ENCODE measurements at regions of chr13 and their contacts with region 1.

Region 1: GRCh38 chr13:59677966-59678814 is 485.5 kb downstream of the DIAPH3 start:
- DNase-seq: peak; percentile 79
- H3K4me3 ChIP-seq: no peak overlapping the region
- H3K27ac ChIP-seq: no peak overlapping the region
- H3K4me1 ChIP-seq: peaks cover 2% of the 10 kb centered on the region
- H3K27me3 ChIP-seq: no peaks in the 10 kb centered on the region
- CTCF ChIP-seq: peak; percentile 69 to 70
- POLR2A ChIP-seq: no peak

Region 2: DNA sequence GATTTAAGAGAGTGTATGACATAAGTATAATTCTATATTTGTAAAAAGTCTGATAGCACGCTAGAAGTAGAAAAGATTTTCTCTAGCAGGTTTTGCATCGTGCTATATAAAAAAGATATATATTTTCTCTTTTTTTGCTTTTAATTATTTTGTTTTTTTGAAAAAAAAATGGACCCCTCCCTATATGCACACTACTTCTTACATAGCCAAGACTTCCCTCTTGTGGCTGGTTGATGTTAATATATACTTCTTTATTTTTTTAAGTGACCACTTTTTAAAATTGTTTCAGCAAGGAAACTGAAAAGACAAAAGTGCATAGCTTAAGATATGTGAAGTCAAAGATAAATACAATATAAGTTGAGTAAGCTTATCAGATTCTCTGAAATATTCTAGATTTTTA is 717.3 kb before region 1 on chr13:
- CTCF ChIA-PET with region 1: no interaction called
- POLR2A ChIA-PET with region 1: no interaction called
- dilution Hi-C with region 1: no loop called
- intact Hi-C with region 1: loop called (anchors 5 kb)
- DNase-seq: peak; percentile 33
- H3K4me3 ChIP-seq: no peak overlapping the region
- H3K27ac ChIP-seq: no peak overlapping the region
- H3K4me1 ChIP-seq: no peaks in the 10 kb centered on the region
- H3K27me3 ChIP-seq: no peaks in the 10 kb centered on the region
- CTCF ChIP-seq: peak in 1 of 2 donors; percentile 8
- POLR2A ChIP-seq: no peak

Region 3: GRCh38 chr13:59274958-59275727 is 403.0 kb before region 1 on chr13:
- CTCF ChIA-PET with region 1: no interaction called
- POLR2A ChIA-PET with region 1: no interaction called
- dilution Hi-C with region 1: no loop called
- intact Hi-C with region 1: no loop called
- DNase-seq: peak; percentile 21
- H3K4me3 ChIP-seq: no peak overlapping the region
- H3K27ac ChIP-seq: no peak overlapping the region
- H3K4me1 ChIP-seq: peaks cover 12% of the 10 kb centered on the region
- H3K27me3 ChIP-seq: no peaks in the 10 kb centered on the region
- CTCF ChIP-seq: no peak
- POLR2A ChIP-seq: no peak

Region 4: GRCh38 chr13:59343993-59344822 is 334.0 kb before region 1 on chr13:
- CTCF ChIA-PET with region 1: no interaction called
- POLR2A ChIA-PET with region 1: no interaction called
- dilution Hi-C with region 1: no loop called
- intact Hi-C with region 1: loop called (anchors 5 kb)
- DNase-seq: no peak
- H3K4me3 ChIP-seq: no peak overlapping the region
- H3K27ac ChIP-seq: no peak overlapping the region
- H3K4me1 ChIP-seq: peaks cover 12% of the 10 kb centered on the region
- H3K27me3 ChIP-seq: no peaks in the 10 kb centered on the region
- CTCF ChIP-seq: no peak
- POLR2A ChIP-seq: no peak

Region 5: DNA sequence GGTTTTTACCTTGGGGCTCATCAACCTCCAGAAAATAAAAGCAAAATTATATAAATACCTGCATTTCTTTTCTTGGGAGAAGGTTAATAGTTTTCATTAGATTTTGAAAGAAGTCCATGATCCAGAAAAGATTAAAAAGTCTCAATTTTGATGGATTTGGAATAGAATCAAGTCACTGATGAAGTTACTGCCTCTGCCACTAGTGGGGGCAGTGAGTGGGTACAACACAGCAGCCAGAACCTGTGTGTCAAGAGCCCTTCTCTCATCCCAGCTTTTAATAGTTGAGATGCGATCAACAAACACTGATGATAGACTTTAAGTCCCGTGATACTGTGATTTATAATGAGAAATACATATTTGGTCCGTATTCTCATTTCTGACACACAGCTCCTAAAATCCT is 201.2 kb before region 1 on chr13:
- CTCF ChIA-PET with region 1: interaction called, 3 read pairs
- POLR2A ChIA-PET with region 1: no interaction called
- dilution Hi-C with region 1: no loop called
- intact Hi-C with region 1: loop called (anchors 1 kb)
- DNase-seq: peak; percentile 41
- H3K4me3 ChIP-seq: no peak overlapping the region
- H3K27ac ChIP-seq: no peak overlapping the region
- H3K4me1 ChIP-seq: peaks cover 44% of the 10 kb centered on the region
- H3K27me3 ChIP-seq: no peaks in the 10 kb centered on the region
- CTCF ChIP-seq: peak; percentile 51 to 59
- POLR2A ChIP-seq: no peak

Region 6: GRCh38 chr13:59771272-59771671 is 93.1 kb after region 1 on chr13:
- CTCF ChIA-PET with region 1: interaction called, 65 read pairs
- POLR2A ChIA-PET with region 1: no interaction called
- dilution Hi-C with region 1: no loop called
- intact Hi-C with region 1: loop called (anchors 1 kb)
- DNase-seq: peak; percentile 25
- H3K4me3 ChIP-seq: no peak overlapping the region
- H3K27ac ChIP-seq: no peak overlapping the region
- H3K4me1 ChIP-seq: no peaks in the 10 kb centered on the region
- H3K27me3 ChIP-seq: no peaks in the 10 kb centered on the region
- CTCF ChIP-seq: peak; percentile 39 to 46
- POLR2A ChIP-seq: no peak

Region 7: DNA sequence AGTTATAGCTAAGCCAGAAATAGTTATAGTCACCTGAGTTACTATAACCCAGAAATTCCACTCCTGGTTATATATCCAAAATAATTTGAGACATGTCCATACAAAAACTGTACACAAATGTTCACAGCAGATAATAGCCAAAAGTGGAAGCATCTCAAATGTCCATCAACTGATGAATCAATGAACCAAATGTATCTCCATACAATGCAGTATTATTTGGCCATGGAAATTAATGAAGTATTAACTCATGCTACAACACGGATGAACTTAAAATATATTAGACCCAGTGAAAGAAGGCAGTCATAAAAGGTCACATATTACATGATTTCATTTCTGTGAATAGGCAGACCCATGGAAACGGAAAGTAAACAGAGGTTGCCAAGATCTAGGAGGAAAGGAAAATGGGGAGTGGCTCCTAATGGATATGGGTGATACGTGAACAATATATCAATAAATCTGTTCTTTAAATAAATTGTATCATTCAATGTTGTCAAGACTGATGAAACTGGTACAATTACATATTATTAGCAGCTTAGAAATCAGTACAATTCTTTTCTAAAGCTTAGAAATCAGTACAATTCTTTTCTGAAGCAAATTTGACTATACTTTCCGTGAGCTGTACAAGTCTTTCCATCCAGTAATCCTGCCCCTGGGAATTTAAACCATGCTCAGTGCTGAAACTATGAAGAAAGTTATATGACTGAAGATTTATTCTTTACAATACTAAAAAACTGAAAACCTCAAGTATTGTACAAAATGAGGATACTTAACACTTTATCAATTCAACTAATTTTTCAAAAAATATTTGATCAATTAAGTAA is 532.5 kb after region 1 on chr13:
- CTCF ChIA-PET with region 1: no interaction called
- POLR2A ChIA-PET with region 1: no interaction called
- dilution Hi-C with region 1: no loop called
- intact Hi-C with region 1: no loop called
- DNase-seq: no peak
- H3K4me3 ChIP-seq: no peak overlapping the region
- H3K27ac ChIP-seq: no peak overlapping the region
- H3K4me1 ChIP-seq: no peaks in the 10 kb centered on the region
- H3K27me3 ChIP-seq: peaks cover 3 to 8% of the 10 kb centered on the region in 2 experiments
- CTCF ChIP-seq: no peak
- POLR2A ChIP-seq: no peak

Region 8: DNA sequence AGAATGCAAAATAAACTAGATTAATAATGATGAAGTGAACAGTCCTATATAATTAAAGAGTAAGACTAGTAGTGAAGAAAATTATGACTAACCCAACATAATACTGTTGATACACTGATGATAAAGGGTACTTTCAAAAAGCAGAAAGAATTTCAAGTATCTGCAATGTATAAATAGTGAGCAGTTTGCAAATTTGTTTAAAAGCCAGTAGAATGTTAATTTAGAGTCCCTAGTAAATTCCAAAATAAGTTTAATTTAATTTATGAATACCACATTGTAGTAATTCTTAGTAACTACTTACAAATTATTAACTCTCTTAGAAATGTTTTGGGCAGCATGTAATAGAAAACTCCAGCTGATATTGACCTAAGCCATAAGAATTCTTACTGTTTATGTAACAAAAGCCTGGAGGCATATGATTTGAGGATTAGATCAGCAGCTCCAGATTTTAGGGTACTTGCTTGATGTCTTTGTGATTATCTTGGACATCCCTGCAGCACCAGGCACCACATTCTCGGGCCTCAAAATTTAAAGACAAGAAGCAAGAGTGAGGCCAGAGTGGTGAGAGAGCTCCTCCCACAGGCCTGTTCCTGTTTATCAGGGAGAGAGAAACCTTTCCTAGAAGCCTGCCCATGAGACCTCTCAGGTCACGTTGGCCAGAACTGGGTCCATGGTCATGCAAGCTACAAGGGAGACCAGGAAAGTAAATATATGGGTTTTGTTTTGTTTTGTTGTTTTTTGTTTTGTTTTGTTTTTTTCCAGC is 651.2 kb after region 1 on chr13:
- CTCF ChIA-PET with region 1: interaction called, 33 read pairs
- POLR2A ChIA-PET with region 1: no interaction called
- dilution Hi-C with region 1: no loop called
- intact Hi-C with region 1: loop called (anchors 2 kb)
- DNase-seq: peak; percentile 2
- H3K4me3 ChIP-seq: no peak overlapping the region
- H3K27ac ChIP-seq: no peak overlapping the region
- H3K4me1 ChIP-seq: peaks cover 7% of the 10 kb centered on the region
- H3K27me3 ChIP-seq: peaks cover 0 to 1% of the 10 kb centered on the region in 2 experiments
- CTCF ChIP-seq: peak in 1 of 2 donors; percentile 21
- POLR2A ChIP-seq: no peak

Measured in endothelial cell of umbilical vein (primary cell).